Activated CD4-positive, alpha-beta memory T cell treated with anti-CD3 and anti-CD28 coated beads for 36 hours (primary cell): ENCODE measurements at regions of chr3 and their contacts with region 1.

Region 1: GRCh38 chr3:171772427-171773056 is 37.7 kb downstream of the PLD1 start:
- DNase-seq: peak; percentile 63
- H3K4me3 Mint-ChIP-seq: no peak overlapping the region
- H3K27ac Mint-ChIP-seq: no peak overlapping the region
- H3K4me1 Mint-ChIP-seq: no peaks in the 10 kb centered on the region
- H3K27me3 Mint-ChIP-seq: peaks cover 1% of the 10 kb centered on the region

Region 2: DNA sequence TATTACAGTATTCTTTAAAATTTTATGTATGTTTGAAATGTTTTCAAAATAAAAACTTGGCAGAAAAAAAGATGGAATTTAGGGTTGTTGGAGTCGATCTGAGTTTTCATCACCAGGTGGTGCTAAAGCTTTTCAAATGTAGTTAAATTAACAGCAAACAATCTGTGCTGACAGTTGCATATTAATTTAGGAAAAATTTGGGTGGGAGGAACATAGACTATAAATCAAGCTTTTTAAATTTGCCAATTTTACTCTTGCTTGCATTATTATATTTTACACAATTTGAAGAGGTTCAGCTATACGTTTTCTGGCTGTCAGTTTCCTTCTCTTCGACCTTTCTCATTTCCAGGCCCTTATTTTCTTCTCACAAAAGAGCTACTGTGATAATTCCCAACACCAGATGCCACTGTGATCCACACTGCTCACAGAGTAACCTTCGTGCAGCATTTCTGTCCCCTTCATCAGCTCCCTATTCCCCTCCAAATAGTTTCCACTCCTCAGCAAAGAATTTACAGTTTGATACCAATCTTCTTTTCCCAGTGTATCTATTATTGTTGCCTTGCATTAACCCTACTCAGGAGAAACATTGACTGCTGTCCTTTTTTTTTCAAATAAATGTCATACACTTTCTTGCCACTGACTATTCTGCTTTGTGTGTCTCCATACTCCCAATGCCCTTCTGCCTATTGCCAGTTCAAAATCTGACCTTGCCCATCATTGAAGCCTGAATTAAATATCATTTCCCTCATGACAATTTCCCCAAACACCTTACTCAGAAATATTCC is 810.7 kb before region 1 on chr3:
- CTCF ChIA-PET with region 1: interaction called, 22 read pairs
- POLR2A ChIA-PET with region 1: no interaction called
- intact Hi-C with region 1: loop called (anchors 1 kb)
- DNase-seq: no peak
- H3K4me3 Mint-ChIP-seq: no peak overlapping the region
- H3K27ac Mint-ChIP-seq: no peak overlapping the region
- H3K4me1 Mint-ChIP-seq: no peaks in the 10 kb centered on the region
- H3K27me3 Mint-ChIP-seq: peaks cover 5% of the 10 kb centered on the region

Region 3: GRCh38 chr3:171566803-171567422 is 205.6 kb before region 1 on chr3:
- CTCF ChIA-PET with region 1: interaction called, 6 read pairs
- POLR2A ChIA-PET with region 1: no interaction called
- intact Hi-C with region 1: loop called (anchors 5 kb)
- DNase-seq: no peak
- H3K4me3 Mint-ChIP-seq: no peak overlapping the region
- H3K27ac Mint-ChIP-seq: no peak overlapping the region
- H3K4me1 Mint-ChIP-seq: peaks cover 12% of the 10 kb centered on the region
- H3K27me3 Mint-ChIP-seq: peaks cover 5% of the 10 kb centered on the region

Region 4: GRCh38 chr3:171606151-171606751 is 166.3 kb before region 1 on chr3:
- CTCF ChIA-PET with region 1: no interaction called
- POLR2A ChIA-PET with region 1: no interaction called
- intact Hi-C with region 1: no loop called
- DNase-seq: no peak
- H3K4me3 Mint-ChIP-seq: no peak overlapping the region
- H3K27ac Mint-ChIP-seq: no peak overlapping the region
- H3K4me1 Mint-ChIP-seq: no peaks in the 10 kb centered on the region
- H3K27me3 Mint-ChIP-seq: no peaks in the 10 kb centered on the region

Region 5: DNA sequence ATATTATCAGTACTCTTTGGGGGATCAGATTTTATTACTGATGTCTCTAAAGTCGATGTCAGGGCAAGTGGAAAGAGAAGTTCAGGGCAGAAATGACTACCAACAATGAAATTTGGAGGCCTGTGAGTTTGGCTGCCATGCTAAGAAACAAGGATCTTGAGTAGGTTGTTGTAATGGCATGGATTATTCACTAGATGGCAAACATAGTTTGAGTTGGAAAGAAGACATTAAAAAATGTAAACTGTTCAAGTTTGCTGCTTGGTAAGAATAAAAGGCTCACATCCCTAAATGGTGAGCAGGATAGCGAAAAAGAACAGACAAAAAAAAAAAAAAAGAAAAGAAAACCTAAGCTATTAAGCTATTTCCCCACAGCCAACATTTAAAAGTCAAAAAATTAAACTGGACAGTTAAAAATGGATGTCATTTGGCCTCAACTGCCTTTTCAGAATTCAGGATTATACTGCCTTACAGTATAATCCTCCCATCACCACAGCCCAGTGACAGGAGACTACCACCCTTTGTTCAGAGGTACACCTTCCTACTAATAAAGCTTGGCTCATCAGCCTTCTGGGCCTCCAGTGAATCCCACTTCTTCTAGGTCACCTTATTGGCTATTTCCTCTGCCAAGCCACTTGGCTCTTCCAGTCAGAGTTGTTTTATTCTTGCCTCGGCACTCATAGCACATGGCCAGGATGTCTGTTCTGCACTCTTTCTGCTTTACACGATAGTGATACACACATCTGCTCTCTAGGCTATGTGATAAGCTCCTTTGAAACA is 126.0 kb before region 1 on chr3:
- CTCF ChIA-PET with region 1: interaction called, 65 read pairs
- POLR2A ChIA-PET with region 1: no interaction called
- intact Hi-C with region 1: loop called (anchors 1 kb)
- DNase-seq: no peak
- H3K4me3 Mint-ChIP-seq: no peak overlapping the region
- H3K27ac Mint-ChIP-seq: no peak overlapping the region
- H3K4me1 Mint-ChIP-seq: no peaks in the 10 kb centered on the region
- H3K27me3 Mint-ChIP-seq: no peaks in the 10 kb centered on the region

Region 6: GRCh38 chr3:171741385-171741784 is 31.2 kb before region 1 on chr3:
- CTCF ChIA-PET with region 1: interaction called, 12 read pairs
- POLR2A ChIA-PET with region 1: no interaction called
- intact Hi-C with region 1: no loop called
- DNase-seq: no peak
- H3K4me3 Mint-ChIP-seq: no peak overlapping the region
- H3K27ac Mint-ChIP-seq: no peak overlapping the region
- H3K4me1 Mint-ChIP-seq: no peaks in the 10 kb centered on the region
- H3K27me3 Mint-ChIP-seq: peaks cover 7% of the 10 kb centered on the region

Region 7: DNA sequence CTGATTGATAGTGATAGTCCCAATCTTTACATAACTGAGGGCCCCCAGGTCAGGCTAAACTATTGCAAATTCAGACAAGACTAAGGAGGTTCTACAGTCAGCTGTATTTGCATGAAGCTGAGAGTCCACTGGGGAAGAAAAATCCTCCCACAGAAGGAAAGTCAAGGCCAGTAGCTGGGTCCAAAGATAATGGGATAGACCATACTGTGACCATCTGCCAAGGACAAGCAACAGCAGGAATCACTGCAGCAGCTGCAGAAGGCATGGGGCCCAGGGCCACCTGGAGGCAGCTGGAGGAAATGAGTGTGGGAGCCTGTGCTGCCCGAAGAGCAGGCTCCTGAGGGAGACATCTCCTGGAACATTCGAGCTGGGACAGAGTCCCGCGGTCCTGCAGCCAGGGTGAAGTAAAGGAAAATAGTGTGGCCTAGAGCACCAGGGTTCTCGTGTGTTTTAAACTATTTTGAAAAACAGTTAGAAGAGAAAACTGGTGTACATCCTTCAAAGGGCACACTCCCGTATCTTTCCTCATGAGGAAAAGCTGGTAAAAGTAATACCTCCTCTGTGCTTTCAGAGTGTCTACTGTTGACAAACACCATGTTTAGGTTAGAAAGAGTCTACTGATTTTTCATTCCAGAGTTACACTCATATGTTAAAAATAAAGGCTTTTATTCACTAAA is 57.4 kb after region 1 on chr3:
- CTCF ChIA-PET with region 1: interaction called, 16 read pairs
- POLR2A ChIA-PET with region 1: no interaction called
- intact Hi-C with region 1: no loop called
- DNase-seq: peak; percentile 40
- H3K4me3 Mint-ChIP-seq: no peak overlapping the region
- H3K27ac Mint-ChIP-seq: no peak overlapping the region
- H3K4me1 Mint-ChIP-seq: peaks cover 9% of the 10 kb centered on the region
- H3K27me3 Mint-ChIP-seq: peaks cover 4% of the 10 kb centered on the region